Calu3 (cell line): ENCODE measurements at regions of chr15 and their contacts with region 1.

Region 1: GRCh38 chr15:90482124-90483011 is 47.4 kb upstream of the CRTC3 start:
- DNase-seq: peak; percentile 63
- H3K4me3 Mint-ChIP-seq: no peak overlapping the region
- H3K27ac Mint-ChIP-seq: no peak overlapping the region
- H3K4me1 Mint-ChIP-seq: peaks cover 43% of the 10 kb centered on the region
- H3K27me3 Mint-ChIP-seq: no peaks in the 10 kb centered on the region
- CTCF ChIP-seq: no peak

Region 2: DNA sequence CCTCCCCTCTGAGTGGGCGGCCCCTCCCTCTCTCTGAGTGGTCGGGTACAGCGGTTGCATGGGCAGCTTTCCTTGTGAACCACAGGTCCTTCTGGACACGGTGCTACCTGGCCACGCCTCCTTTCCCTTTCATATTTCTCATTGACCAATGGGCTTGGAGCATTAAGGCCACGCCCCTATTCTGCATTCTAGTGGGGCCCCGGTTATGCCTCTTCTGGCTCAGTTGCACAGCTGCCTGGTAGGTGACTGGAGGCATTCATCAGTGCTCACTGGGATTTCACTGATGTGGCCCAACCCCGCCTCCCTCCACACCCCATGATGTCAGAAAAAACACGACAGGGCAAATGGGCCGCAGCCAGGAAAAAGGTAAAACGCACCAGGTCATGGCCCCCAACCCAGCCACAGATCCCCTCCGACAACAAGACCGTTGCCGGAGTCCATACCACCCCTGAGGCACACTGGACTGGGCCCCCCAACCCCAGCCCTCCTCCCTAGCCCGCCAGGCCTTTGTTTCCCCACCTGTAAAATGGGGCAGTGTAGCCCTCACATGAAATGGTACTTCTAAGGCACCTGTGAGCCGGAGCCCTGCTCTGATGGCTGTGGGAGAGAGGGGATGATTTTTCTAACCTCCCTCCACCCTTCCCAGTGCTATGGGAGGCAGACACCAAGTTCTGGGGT is 190.6 kb before region 1 on chr15:
- CTCF ChIA-PET with region 1: interaction called, 17 read pairs
- intact Hi-C with region 1: loop called (anchors 1 kb)
- DNase-seq: peak; percentile 59
- H3K4me3 Mint-ChIP-seq: no peak overlapping the region
- H3K27ac Mint-ChIP-seq: no peak overlapping the region
- H3K4me1 Mint-ChIP-seq: peaks cover 11% of the 10 kb centered on the region
- H3K27me3 Mint-ChIP-seq: no peaks in the 10 kb centered on the region
- CTCF ChIP-seq: no peak

Region 3: DNA sequence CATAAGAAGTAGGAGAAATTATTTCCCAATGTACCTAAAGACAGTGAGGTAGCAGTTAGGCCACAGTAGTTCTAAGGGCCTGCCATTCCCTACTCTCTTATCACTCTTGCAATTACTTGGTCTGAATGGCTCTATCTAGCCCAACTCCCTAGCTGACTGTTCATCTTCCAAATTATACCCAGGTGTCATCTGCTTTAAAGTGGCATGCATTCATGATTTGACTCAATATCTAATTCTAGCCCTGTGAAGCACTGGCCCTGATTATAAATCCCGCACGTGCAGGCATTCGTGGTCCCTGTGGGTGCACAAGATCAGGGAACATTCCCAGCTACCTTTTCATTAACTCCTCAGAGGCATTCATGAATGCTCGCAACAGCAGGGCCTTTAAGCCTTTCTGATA is 173.3 kb before region 1 on chr15:
- CTCF ChIA-PET with region 1: no interaction called
- intact Hi-C with region 1: no loop called
- DNase-seq: no peak
- H3K4me3 Mint-ChIP-seq: no peak overlapping the region
- H3K27ac Mint-ChIP-seq: no peak overlapping the region
- H3K4me1 Mint-ChIP-seq: no peaks in the 10 kb centered on the region
- H3K27me3 Mint-ChIP-seq: peaks cover 17% of the 10 kb centered on the region
- CTCF ChIP-seq: no peak

Region 4: DNA sequence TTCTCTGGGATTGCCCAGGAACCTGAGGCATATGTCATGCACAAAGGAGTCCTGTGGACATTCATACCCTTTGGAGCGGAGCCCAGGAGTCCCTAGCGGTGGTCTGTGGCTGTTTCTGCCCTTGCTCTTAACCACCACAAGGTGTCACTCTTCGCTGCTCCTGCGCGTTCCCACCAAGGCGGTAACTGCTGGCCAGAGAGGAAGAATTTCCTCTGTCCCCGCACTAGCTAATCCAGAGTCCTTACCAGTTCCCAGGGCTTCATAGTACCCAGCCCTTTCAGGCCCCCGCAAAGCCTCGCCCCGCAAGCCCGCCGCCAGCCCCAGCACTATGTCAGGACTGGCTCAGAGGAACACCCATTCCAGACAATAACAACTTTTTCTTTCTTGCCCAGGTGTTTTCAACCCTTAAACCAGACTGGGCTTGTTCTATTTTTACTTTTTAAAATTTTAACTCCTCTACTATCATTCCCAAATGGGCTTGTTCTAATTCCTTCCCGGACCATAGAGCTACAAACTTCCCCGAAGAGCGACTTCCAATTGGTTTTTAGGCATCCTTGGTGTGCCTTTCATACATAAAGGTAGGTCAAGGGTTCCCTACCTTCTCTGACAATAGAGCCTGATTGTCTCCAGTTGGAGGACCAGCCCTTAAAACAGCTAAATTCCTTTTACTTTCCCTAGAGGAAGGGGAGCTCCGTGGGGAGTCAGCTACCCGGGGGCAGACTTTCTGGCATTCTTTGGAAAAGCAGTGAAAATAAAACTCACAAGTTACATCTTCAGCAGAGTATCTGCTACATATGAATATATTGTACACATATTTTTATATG is 162.1 kb before region 1 on chr15:
- CTCF ChIA-PET with region 1: interaction called, 23 read pairs
- intact Hi-C with region 1: loop called (anchors 1 kb)
- DNase-seq: peak; percentile 84
- H3K4me3 Mint-ChIP-seq: peak overlapping the region; percentile 7
- H3K27ac Mint-ChIP-seq: peak overlapping the region; percentile 34
- H3K4me1 Mint-ChIP-seq: peaks cover 21% of the 10 kb centered on the region
- H3K27me3 Mint-ChIP-seq: no peaks in the 10 kb centered on the region
- CTCF ChIP-seq: peak; percentile 97

Region 5: GRCh38 chr15:90336705-90337141 is 145.6 kb before region 1 on chr15:
- CTCF ChIA-PET with region 1: no interaction called
- intact Hi-C with region 1: loop called (anchors 5 kb)
- DNase-seq: no peak
- H3K4me3 Mint-ChIP-seq: no peak overlapping the region
- H3K27ac Mint-ChIP-seq: no peak overlapping the region
- H3K4me1 Mint-ChIP-seq: peaks cover 50% of the 10 kb centered on the region
- H3K27me3 Mint-ChIP-seq: no peaks in the 10 kb centered on the region
- CTCF ChIP-seq: no peak

Region 6: GRCh38 chr15:90362936-90363212 is 119.5 kb before region 1 on chr15:
- CTCF ChIA-PET with region 1: interaction called, 10 read pairs
- intact Hi-C with region 1: loop called (anchors 1 kb)
- DNase-seq: no peak
- H3K4me3 Mint-ChIP-seq: no peak overlapping the region
- H3K27ac Mint-ChIP-seq: peak overlapping the region; percentile 31
- H3K4me1 Mint-ChIP-seq: peaks cover 41% of the 10 kb centered on the region
- H3K27me3 Mint-ChIP-seq: no peaks in the 10 kb centered on the region
- CTCF ChIP-seq: no peak

Region 7: GRCh38 chr15:90680371-90680935 is 198.1 kb after region 1 on chr15:
- CTCF ChIA-PET with region 1: no interaction called
- intact Hi-C with region 1: no loop called
- DNase-seq: no peak
- H3K4me3 Mint-ChIP-seq: no peak overlapping the region
- H3K27ac Mint-ChIP-seq: no peak overlapping the region
- H3K4me1 Mint-ChIP-seq: no peaks in the 10 kb centered on the region
- H3K27me3 Mint-ChIP-seq: peaks cover 9% of the 10 kb centered on the region
- CTCF ChIP-seq: no peak